MCF 10A (cell line): ENCODE measurements at regions of chr15 and their contacts with region 1.

Region 1: GRCh38 chr15:81323944-81324881 is at the start of gene STARD5:
- DNase-seq: peak; percentile 97
- H3K4me3 Mint-ChIP-seq: peak within 1 kb of the TSS; percentile 80
- H3K27ac Mint-ChIP-seq: peak within 1 kb of the TSS; percentile 32
- H3K4me1 Mint-ChIP-seq: peaks cover 26% of the 10 kb centered on the region
- H3K27me3 Mint-ChIP-seq: no peaks in the 10 kb centered on the region
- CTCF ChIP-seq: no peak
- total RNA-seq, gene STARD5: 2.0 and 3.4 TPM in 2 replicates

Region 2: GRCh38 chr15:81296673-81297072 is 27.5 kb before region 1 on chr15:
- CTCF ChIA-PET with region 1: no interaction called
- POLR2A ChIA-PET with region 1: interaction called, 4 read pairs
- intact Hi-C with region 1: loop called (anchors 1 kb)
- DNase-seq: peak; percentile 48
- H3K4me3 Mint-ChIP-seq: no peak overlapping the region
- H3K27ac Mint-ChIP-seq: no peak overlapping the region
- H3K4me1 Mint-ChIP-seq: peaks cover 22% of the 10 kb centered on the region
- H3K27me3 Mint-ChIP-seq: no peaks in the 10 kb centered on the region
- CTCF ChIP-seq: no peak